ENCODE measurements at regions of chr9 and their contacts with region 1.

Region 1: DNA sequence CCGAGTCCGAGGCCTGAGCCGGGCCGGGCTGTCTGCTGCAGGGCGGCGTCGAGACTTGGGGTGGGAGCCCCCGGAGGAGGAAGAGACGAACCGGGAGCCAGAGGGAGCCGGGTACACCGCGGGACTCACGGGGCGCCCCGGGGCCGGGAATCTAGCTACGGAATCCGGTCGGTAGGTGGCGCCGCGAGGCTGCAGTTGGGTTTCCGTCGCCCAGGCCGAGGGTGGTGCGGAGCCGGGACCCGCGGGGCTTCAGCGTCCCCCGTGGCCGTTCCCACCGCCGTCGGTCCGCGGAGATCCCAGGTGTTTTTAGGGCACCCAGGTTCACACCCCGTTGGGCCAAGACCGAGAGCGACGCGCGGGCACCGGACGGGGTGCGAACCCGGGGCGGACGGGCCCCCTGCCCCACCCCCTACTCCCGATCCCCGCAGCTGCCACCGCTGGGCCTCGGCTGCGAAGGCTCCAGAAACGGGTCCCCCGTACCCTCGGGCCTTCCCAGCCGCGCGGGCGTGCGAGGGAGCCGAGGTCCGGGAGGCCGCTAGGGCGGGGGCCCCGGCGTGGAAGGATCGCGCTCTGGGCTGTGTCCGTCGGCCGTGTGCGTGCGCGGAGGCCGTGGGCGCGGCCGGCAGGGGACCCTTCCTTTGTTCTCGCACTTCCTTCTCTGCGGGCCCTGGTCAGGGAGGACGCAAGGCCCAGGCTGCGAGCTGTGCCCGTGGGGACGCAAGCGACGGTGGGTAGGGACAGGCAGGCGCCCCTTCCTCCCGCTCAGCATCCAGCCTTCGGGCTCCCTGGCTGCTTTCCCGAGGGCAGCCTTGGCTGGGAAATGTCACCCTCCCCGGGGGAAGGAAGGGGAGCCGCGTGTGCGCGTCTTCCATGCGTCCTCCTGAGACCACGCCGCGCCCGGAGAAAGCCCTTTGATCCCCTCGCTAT is 146.6 kb downstream of the GAPVD1 start:
- DNase-seq: peak; percentile 97
- H3K4me3 ChIP-seq: peak overlapping the region; percentile 46 to 68
- H3K27ac ChIP-seq: no peak overlapping the region
- H3K4me1 ChIP-seq: peaks cover 0 to 5% of the 10 kb centered on the region in 2 experiments; a peak in 1 of 4 replicates
- H3K27me3 ChIP-seq: no peaks in the 10 kb centered on the region
- CTCF ChIP-seq: peak; percentile 84
- EP300 ChIP-seq: no peak
- RAD21 ChIP-seq: peak; percentile 87

Region 2: DNA sequence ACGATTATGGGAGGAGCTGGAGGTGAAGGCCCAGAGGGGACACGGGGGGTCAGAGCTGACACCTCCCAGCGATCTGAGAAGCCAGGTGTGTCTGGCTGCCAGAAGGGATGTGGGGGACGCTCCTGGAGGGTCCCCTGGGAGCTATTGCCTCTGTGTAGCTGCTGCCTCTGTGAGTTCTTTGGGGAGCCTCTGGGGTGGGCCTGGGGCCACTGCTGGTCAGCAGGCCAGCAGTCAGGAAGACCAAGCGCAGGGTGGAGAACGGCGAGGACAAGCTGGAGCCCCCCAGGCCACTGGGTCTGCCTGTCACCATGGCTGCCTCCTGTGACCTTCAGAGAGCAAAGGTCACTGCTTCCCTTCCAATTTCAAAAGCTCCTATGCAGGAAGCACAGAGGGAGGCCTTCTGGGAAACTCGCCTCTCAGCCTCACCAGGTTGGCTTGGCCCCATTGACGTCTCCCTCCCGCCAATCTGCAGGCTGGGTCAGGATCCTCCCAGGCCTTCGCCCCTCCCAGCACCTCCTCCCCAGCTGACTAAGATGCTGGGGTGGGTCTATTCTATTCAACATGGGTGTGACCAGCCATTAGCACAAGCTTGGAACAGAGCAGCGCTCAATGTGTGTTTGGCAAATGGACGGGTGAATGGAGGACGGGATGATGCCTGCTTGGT is 20.2 kb before region 1 on chr9:
- CTCF ChIA-PET with region 1: interaction called, 12 read pairs
- POLR2A ChIA-PET with region 1: no interaction called
- DNase-seq: no peak
- H3K4me3 ChIP-seq: no peak overlapping the region
- H3K27ac ChIP-seq: no peak overlapping the region
- H3K4me1 ChIP-seq: no peaks in the 10 kb centered on the region
- H3K27me3 ChIP-seq: no peaks in the 10 kb centered on the region
- CTCF ChIP-seq: no peak
- EP300 ChIP-seq: no peak
- RAD21 ChIP-seq: no peak

Region 3: DNA sequence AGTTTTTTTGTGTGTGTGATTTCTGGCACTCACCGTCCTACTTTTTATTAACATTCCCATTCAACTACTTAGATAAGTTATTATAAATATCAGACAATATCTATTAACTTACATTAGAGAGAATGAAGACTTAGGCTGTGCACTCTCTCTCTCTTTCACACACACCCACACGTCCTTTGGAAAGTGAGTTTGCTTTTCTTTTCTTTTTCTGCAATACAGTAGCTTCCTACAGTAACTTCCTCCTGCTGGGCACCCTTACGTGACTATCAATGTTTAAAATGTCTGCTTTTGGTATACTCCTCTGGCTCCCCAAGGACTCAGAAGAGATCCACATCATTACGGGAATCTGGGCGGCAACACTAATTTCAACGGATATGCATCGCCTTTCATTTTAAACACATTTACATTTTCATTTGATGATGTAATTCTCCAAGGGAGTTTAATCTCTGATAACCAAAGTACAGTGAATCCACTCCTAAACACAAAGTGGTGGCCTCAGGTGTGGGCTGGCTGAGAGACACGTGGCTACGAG is 119.3 kb after region 1 on chr9:
- CTCF ChIA-PET with region 1: interaction called, 11 read pairs
- POLR2A ChIA-PET with region 1: no interaction called
- DNase-seq: no peak
- H3K4me3 ChIP-seq: no peak overlapping the region
- H3K27ac ChIP-seq: peak overlapping the region in 1 of 2 experiments; percentile 98; a peak in 3 of 4 replicates
- H3K4me1 ChIP-seq: peaks cover 18 to 38% of the 10 kb centered on the region in 2 experiments; a peak in 3 of 4 replicates
- H3K27me3 ChIP-seq: no peaks in the 10 kb centered on the region
- CTCF ChIP-seq: no peak
- EP300 ChIP-seq: no peak
- RAD21 ChIP-seq: no peak

Region 4: GRCh38 chr9:125544988-125545651 is 136.9 kb after region 1 on chr9:
- CTCF ChIA-PET with region 1: interaction called, 26 read pairs
- POLR2A ChIA-PET with region 1: no interaction called
- DNase-seq: no peak
- H3K4me3 ChIP-seq: no peak overlapping the region
- H3K27ac ChIP-seq: peak overlapping the region; percentile 76 to 90
- H3K4me1 ChIP-seq: peaks cover 49 to 53% of the 10 kb centered on the region in 2 experiments
- H3K27me3 ChIP-seq: no peaks in the 10 kb centered on the region
- CTCF ChIP-seq: no peak
- EP300 ChIP-seq: peak; percentile 72 to 97
- RAD21 ChIP-seq: no peak

Region 5: DNA sequence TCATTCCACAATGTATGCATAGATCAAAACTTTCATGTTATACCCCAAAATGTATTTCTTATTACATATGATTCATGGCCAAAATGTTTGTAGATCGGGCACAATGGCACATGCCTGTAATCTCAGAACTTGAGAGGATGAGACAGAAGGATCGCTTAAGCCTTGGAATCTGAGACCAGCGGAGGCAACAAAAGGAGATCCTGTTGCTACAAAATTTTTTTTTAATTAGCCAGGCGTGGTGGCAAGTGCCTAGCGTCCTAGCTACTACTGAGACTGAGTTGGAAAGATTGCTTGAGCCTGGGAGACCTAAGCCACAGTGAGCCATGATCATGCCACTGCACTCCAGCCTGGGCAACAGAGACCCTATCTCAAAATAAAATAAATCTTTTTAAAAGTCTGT is 208.8 kb after region 1 on chr9:
- CTCF ChIA-PET with region 1: interaction called, 15 read pairs
- POLR2A ChIA-PET with region 1: no interaction called
- DNase-seq: no peak
- H3K4me3 ChIP-seq: no peak overlapping the region
- H3K27ac ChIP-seq: no peak overlapping the region
- H3K4me1 ChIP-seq: no peaks in the 10 kb centered on the region; a peak in 1 of 4 replicates
- H3K27me3 ChIP-seq: no peaks in the 10 kb centered on the region
- CTCF ChIP-seq: no peak
- EP300 ChIP-seq: no peak
- RAD21 ChIP-seq: no peak

Region 6: DNA sequence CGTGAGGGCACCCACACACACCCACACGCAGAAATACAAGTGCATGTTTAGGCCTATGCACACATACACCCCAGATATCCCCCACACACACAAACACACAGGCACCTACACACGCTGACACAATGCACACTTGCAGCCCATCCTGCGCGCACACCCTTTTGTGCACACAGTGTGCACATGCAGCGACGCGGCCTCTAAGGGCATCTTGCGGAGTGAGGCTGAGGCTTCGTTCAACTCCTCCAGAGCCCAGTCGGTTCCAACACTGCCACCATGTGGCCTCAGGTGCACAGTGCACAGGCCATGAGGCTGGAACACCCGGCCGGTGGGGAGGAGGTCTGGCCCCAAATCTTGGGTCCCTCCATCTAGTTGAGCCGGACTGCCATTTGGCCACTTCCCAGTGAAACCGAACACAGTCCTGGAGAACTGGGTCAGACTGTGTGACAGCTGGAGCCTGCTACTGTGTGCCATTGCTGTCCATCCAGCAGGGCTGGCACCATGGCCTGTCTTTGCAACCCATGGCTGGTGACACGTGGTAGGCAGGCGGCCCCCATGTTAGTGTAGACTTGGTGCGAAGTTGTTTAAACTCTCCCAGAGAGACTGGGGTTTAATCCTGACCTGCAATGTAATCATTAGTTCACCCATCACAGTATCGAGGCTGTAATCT is 820.7 kb after region 1 on chr9:
- CTCF ChIA-PET with region 1: interaction called, 20 read pairs
- POLR2A ChIA-PET with region 1: no interaction called
- DNase-seq: peak; percentile 90
- H3K4me3 ChIP-seq: peak overlapping the region in 1 of 2 experiments; percentile 36; a peak in 1 of 4 replicates
- H3K27ac ChIP-seq: no peak overlapping the region
- H3K4me1 ChIP-seq: peaks cover 0 to 2% of the 10 kb centered on the region in 2 experiments; a peak in 1 of 4 replicates
- H3K27me3 ChIP-seq: no peaks in the 10 kb centered on the region
- CTCF ChIP-seq: peak; percentile 89
- EP300 ChIP-seq: no peak
- RAD21 ChIP-seq: peak; percentile 95